ENCODE measurements at regions of chr21 and their contacts with region 1.

Region 1: DNA sequence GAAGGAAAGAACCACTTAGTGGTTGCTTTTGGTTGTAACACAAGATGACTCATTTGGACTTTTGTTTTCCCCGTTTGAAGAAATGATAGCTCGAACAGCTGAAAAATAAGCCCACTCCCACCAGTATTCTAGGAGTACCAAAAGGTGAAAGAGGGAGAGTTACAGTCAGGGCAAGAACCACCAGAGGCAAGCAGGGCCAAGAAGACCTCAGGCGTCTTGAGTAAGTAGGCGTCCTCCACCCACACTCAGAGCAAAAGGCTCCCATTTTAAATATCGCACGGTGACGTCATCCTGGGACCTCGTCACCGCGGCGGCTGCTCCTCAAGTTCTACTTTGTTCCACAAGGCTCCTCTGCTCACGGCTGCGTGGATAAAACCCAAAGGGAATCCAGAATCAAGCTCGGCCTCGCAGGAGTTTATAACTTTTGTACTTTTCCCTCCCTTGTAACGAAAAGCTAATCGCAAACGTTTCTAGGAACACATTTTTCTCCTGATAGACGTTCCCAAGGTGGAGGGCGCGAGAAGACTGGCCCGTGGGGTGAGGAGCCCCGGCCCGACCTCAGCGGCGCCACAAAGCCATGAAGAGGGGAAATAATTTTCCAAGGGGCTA is 1.2 kb downstream of the BTG3 start:
- DNase-seq: peak; percentile 89
- H3K4me3 Mint-ChIP-seq: peak overlapping the region; percentile 95
- H3K27ac Mint-ChIP-seq: peak overlapping the region; percentile 95
- H3K4me1 Mint-ChIP-seq: peaks cover 30% of the 10 kb centered on the region
- H3K27me3 Mint-ChIP-seq: no peaks in the 10 kb centered on the region

Region 2: DNA sequence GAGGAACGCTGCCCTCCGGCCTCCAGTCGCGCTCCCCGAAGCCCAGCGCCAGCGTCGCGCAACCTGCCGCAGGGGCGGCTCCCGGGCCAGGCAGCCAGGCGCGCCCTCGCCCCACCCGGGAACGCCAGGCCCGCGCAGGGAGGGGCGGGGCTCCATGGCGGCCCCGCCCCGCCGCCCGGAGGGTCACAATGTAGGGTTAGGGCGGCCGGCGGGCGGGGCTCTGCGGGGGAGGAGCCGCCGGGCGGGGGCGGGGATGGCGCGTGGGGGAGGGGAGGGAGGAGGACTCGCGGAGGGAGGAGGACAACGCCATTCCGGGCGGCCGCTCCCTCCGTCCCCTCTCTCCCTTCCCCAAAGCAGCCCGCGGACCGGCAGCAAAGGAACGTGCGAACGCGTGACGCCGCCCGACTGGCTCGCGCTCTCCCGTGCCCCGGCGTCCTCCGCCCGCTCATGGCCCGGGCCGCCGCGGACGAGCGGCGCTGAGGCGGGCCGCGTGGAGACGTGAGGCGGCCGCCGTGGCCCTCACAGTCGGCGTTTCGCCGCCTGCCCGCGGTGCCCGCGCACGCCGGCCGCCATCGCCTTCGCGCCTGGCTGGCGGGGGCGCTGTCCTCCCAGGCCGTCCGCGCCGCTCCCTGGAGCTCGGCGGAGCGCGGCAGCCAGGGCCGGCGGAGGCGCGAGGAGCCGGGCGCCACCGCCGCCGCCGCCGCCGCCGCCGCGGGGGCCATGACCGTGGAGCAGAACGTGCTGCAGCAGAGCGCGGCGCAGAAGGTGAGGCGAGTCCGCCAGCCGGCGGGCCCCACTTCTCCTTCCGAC is 1881.6 kb before region 1 on chr21 and contains the start of gene USP25:
- CTCF ChIA-PET with region 1: no interaction called
- POLR2A ChIA-PET with region 1: no interaction called
- intact Hi-C with region 1: loop called (anchors 5 kb)
- DNase-seq: peak; percentile 89
- H3K4me3 Mint-ChIP-seq: peak within 1 kb of the TSS; percentile 83
- H3K27ac Mint-ChIP-seq: peak within 1 kb of the TSS; percentile 77
- H3K4me1 Mint-ChIP-seq: peaks cover 20% of the 10 kb centered on the region
- H3K27me3 Mint-ChIP-seq: peaks cover 2% of the 10 kb centered on the region
- total RNA-seq, gene USP25: 31.2 to 31.7 TPM

Region 3: GRCh38 chr21:17479606-17480005 is 131.9 kb before region 1 on chr21:
- CTCF ChIA-PET with region 1: no interaction called
- POLR2A ChIA-PET with region 1: no interaction called
- intact Hi-C with region 1: no loop called
- DNase-seq: no peak
- H3K4me3 Mint-ChIP-seq: no peak overlapping the region
- H3K27ac Mint-ChIP-seq: no peak overlapping the region
- H3K4me1 Mint-ChIP-seq: no peaks in the 10 kb centered on the region
- H3K27me3 Mint-ChIP-seq: no peaks in the 10 kb centered on the region

Region 4: DNA sequence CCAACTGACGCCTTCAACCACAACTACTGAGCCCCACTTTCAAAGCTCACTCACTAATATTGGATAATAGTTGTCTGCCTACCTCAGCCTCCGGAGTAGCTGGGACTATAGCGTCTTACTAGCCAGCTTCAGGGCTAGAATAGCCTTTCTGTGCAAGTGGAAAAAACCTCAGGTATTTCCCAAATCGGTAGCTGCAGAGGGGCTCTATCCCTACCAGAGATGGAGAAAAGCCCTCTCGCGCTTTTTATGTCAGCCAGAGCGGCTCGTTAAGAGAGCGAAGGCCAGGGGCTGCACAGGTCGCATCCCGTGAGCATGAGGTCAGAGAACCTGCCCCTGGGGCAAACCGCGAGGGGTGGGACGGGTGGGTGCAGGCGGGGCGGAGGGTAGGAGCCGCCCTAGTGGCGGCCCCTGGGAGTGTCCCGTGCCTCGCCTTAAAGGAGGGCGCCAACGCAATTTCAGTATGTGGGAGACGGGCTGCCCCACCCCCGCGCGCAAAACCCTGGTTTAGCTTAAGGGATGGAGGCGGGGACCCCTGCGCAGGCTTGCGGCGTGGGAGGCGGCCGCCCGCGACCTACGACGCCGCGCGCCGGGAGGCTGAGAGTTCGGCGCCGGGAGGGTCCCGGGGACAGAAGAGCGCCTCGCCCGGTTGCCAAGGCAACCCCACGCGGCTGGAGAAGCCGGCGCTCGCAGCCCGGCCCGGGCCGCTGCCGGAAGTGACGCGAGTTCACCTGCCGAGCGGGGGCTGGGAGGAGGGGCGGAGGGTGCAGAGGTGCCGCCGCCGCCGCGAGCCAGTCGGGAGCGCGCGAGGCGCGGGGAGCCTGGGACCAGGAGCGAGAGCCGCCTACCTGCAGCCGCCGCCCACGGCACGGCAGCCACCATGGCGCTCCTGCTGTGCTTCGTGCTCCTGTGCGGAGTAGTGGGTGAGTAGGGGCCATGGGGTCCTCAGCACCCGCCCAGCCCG is 99.0 kb before region 1 on chr21 and contains the start of gene CXADR:
- CTCF ChIA-PET with region 1: interaction called, 3 read pairs
- POLR2A ChIA-PET with region 1: no interaction called
- intact Hi-C with region 1: loop called (anchors 1 kb)
- DNase-seq: peak; percentile 83
- H3K4me3 Mint-ChIP-seq: peak within 1 kb of the TSS; percentile 77
- H3K27ac Mint-ChIP-seq: no peak within 1 kb of the TSS
- H3K4me1 Mint-ChIP-seq: peaks cover 14% of the 10 kb centered on the region
- H3K27me3 Mint-ChIP-seq: peaks cover 14% of the 10 kb centered on the region
- total RNA-seq, gene CXADR: 0.29 to 0.75 TPM

Region 5: GRCh38 chr21:17679002-17679600 is 67.6 kb after region 1 on chr21:
- CTCF ChIA-PET with region 1: interaction called, 4 read pairs
- POLR2A ChIA-PET with region 1: no interaction called
- intact Hi-C with region 1: loop called (anchors 2 kb)
- DNase-seq: no peak
- H3K4me3 Mint-ChIP-seq: no peak overlapping the region
- H3K27ac Mint-ChIP-seq: no peak overlapping the region
- H3K4me1 Mint-ChIP-seq: no peaks in the 10 kb centered on the region
- H3K27me3 Mint-ChIP-seq: no peaks in the 10 kb centered on the region

Region 6: GRCh38 chr21:17819114-17819876 is 207.8 kb after region 1 on chr21 and contains the start of gene C21orf91:
- CTCF ChIA-PET with region 1: no interaction called
- POLR2A ChIA-PET with region 1: interaction called, 6 read pairs
- intact Hi-C with region 1: loop called (anchors 1 kb)
- DNase-seq: peak; percentile 92
- H3K4me3 Mint-ChIP-seq: peak within 1 kb of the TSS; percentile 84
- H3K27ac Mint-ChIP-seq: peak within 1 kb of the TSS; percentile 98
- H3K4me1 Mint-ChIP-seq: peaks cover 45% of the 10 kb centered on the region
- H3K27me3 Mint-ChIP-seq: no peaks in the 10 kb centered on the region
- total RNA-seq, gene C21orf91: 23.6 to 24.1 TPM

Measured in activated CD4-positive, alpha-beta memory T cell treated with anti-CD3 and anti-CD28 coated beads for 36 hours (primary cell).